WTC11 (cell line): ENCODE measurements at regions of chr12 and their contacts with region 1.

Region 1: GRCh38 chr12:47941851-47942601 is 21.4 kb upstream of the TMEM106C start:
- DNase-seq: peak; percentile 89
- ATAC-seq: peak; percentile 93
- H3K4me3 Mint-ChIP-seq: peak overlapping the region; percentile 15; the same call in 1 of the 2 replicates
- H3K27ac Mint-ChIP-seq: no peak overlapping the region
- H3K4me1 Mint-ChIP-seq: peaks cover 20% of the 10 kb centered on the region
- H3K27me3 Mint-ChIP-seq: peaks cover 32% of the 10 kb centered on the region
- CTCF ChIP-seq: peak; percentile 48

Region 2: DNA sequence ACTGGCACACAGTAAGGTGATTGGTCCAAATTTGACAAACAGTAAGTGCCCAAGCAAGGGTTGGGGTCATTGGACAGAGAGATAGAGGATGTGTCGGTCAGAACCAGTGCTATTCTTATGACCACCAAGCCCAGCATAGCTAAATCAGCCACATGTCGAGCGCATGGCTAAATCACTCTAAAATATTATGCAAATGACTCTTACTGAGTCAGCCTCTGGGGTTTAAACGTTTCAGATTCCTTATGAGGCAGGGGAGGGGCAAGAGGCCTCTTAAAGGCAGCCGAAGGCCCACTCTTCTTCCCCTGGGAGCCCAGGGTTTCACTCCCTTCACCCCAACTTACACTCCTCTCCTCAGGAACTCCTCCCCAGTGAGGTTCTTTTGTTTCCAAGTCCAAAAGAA is 216.1 kb before region 1 on chr12:
- CTCF ChIA-PET with region 1: no interaction called
- POLR2A ChIA-PET with region 1: no interaction called
- DNase-seq: no peak
- ATAC-seq: no peak
- H3K4me3 Mint-ChIP-seq: no peak overlapping the region
- H3K27ac Mint-ChIP-seq: no peak overlapping the region
- H3K4me1 Mint-ChIP-seq: 0 out of 2 replicates have a peak, but pooled peaks cover 3% of the 10 kb centered on the region
- H3K27me3 Mint-ChIP-seq: peaks cover 24% of the 10 kb centered on the region
- CTCF ChIP-seq: no peak

Region 3: DNA sequence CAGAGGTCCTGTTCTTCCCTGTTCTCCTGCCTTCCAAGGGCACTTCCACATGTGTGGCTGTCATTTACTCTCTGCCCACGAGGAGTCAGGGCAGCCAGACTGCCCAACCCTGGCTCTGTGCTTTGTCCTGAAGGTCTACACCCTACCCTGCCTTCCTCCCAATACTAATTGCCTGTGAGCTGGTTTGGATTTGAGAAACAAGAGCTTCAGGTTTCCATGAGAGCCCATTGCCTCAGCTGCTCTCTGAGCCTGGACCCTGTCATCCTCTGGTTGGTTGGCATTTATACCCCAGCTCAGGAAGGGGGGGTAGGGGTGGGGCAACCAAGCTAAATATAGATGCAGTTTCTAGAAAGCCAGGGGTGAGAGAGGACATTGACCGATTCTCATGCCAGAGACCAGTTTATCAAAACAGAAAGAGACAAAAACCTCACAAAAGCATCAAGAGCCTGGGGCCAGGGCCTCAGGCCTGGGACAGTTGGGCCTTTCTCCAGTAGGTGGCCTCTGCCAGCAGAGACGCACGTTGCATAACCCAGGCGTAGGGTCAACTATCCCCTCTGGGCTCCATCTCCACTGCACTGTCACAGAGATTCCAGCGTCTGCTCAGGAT is 71.7 kb before region 1 on chr12:
- CTCF ChIA-PET with region 1: interaction called, 11 read pairs
- POLR2A ChIA-PET with region 1: no interaction called
- DNase-seq: peak; percentile 68
- ATAC-seq: peak; percentile 100
- H3K4me3 Mint-ChIP-seq: no peak overlapping the region
- H3K27ac Mint-ChIP-seq: no peak overlapping the region
- H3K4me1 Mint-ChIP-seq: peaks cover 8% of the 10 kb centered on the region
- H3K27me3 Mint-ChIP-seq: peaks cover 5% of the 10 kb centered on the region
- CTCF ChIP-seq: peak; percentile 24; the same call in 1 of the 2 replicates

Region 4: DNA sequence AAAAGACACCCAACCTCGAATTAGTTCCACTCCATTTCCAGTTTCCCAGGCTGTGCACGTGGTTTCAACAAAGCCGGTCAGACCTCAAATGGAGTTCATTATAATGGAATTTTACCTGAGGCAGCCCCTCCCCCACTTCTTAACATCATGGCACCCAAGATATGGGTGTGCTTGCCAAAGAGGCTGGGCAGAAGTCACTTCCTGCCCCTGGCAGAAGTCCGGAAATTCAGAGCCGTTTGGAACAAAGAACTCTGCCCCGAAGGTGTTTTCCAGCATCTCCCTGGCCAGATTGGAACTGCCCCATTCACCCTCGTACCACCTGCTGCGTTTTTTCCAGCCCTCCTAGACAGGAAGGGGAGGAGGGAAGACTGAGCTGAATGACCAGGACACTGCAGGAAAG is 45.4 kb before region 1 on chr12:
- CTCF ChIA-PET with region 1: interaction called, 11 read pairs
- POLR2A ChIA-PET with region 1: no interaction called
- DNase-seq: peak; percentile 24
- ATAC-seq: peak; percentile 31
- H3K4me3 Mint-ChIP-seq: no peak overlapping the region
- H3K27ac Mint-ChIP-seq: no peak overlapping the region
- H3K4me1 Mint-ChIP-seq: peaks cover 14% of the 10 kb centered on the region
- H3K27me3 Mint-ChIP-seq: peaks cover 67% of the 10 kb centered on the region
- CTCF ChIP-seq: no peak

Region 5: GRCh38 chr12:47912556-47912955 is 29.5 kb before region 1 on chr12:
- CTCF ChIA-PET with region 1: interaction called, 11 read pairs
- POLR2A ChIA-PET with region 1: no interaction called
- DNase-seq: no peak
- ATAC-seq: no peak
- H3K4me3 Mint-ChIP-seq: no peak overlapping the region
- H3K27ac Mint-ChIP-seq: no peak overlapping the region
- H3K4me1 Mint-ChIP-seq: no peaks in the 10 kb centered on the region
- H3K27me3 Mint-ChIP-seq: peaks cover 40% of the 10 kb centered on the region
- CTCF ChIP-seq: no peak

Region 6: GRCh38 chr12:48119078-48119833 is 177.2 kb after region 1 on chr12 and contains the start of gene PFKM:
- CTCF ChIA-PET with region 1: no interaction called
- POLR2A ChIA-PET with region 1: no interaction called
- DNase-seq: peak; percentile 88
- ATAC-seq: peak; percentile 99
- H3K4me3 Mint-ChIP-seq: peak within 1 kb of the TSS; percentile 92
- H3K27ac Mint-ChIP-seq: peak within 1 kb of the TSS; percentile 82
- H3K4me1 Mint-ChIP-seq: peaks cover 16% of the 10 kb centered on the region
- H3K27me3 Mint-ChIP-seq: peaks cover 13% of the 10 kb centered on the region
- CTCF ChIP-seq: no peak
- total RNA-seq, gene PFKM: 99.3 to 109 TPM (median 108 TPM) in 3 replicates